ENCODE measurements at regions of chr9 and their contacts with region 1.

Region 1: DNA sequence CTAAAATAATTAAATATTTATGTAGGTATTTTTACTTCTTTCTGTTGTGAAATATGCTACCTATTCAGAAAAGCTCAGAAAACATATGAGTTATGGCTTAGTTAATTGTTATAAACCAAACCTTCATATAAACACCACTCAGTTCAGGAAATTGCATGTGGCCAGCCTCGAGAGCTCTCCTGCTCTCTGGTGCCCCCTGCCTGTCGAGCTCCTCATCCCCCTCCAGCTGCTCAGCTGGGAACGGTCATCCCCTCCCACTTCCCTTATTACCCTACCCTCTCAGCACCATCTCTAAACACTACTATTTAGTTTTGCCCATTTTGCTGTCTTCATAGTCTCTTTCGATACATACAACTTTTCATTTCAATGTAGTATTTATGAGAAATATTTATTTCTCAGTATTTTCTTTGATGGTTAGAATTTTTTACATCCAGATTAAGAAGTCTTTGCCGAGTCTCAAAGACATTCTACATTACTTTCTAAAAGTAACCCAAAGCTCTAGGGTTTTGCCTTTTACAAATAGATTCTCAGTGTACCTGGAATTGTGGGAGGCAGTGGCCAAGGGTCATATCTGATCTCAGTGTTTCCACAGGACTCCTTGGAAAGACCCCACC is 51.2 kb upstream of the SEMA4D start:
- DNase-seq: peak; percentile 67 to 90 (median 84)
- H3K4me3 ChIP-seq: no peak overlapping the region
- H3K27ac ChIP-seq: no peak overlapping the region
- H3K4me1 ChIP-seq: no peaks in the 10 kb centered on the region
- H3K27me3 ChIP-seq: no peaks in the 10 kb centered on the region
- CTCF ChIP-seq: peak; percentile 84 to 97 (median 92)
- POLR2A ChIP-seq: no peak

Region 2: GRCh38 chr9:89323390-89323789 is 225.7 kb before region 1 on chr9:
- intact Hi-C with region 1: loop called (anchors 5 to 10 kb)
- DNase-seq: no peak
- H3K4me3 ChIP-seq: no peak overlapping the region
- H3K27ac ChIP-seq: no peak overlapping the region
- H3K4me1 ChIP-seq: peaks cover 12 to 40% of the 10 kb centered on the region in 2 donors
- H3K27me3 ChIP-seq: no peaks in the 10 kb centered on the region
- CTCF ChIP-seq: no peak
- POLR2A ChIP-seq: no peak

Region 3: GRCh38 chr9:89358985-89359384 is 190.2 kb before region 1 on chr9:
- intact Hi-C with region 1: loop called in 1 of 2 experiments (anchors 10 kb)
- DNase-seq: peak in 5 of 7 donors; percentile 20 to 78 (median 40)
- H3K4me3 ChIP-seq: no peak overlapping the region
- H3K27ac ChIP-seq: peak overlapping the region in 1 of 5 donors; percentile 33
- H3K4me1 ChIP-seq: peaks cover 2 to 3% of the 10 kb centered on the region in 2 donors
- H3K27me3 ChIP-seq: no peaks in the 10 kb centered on the region
- CTCF ChIP-seq: no peak
- POLR2A ChIP-seq: no peak

Region 4: DNA sequence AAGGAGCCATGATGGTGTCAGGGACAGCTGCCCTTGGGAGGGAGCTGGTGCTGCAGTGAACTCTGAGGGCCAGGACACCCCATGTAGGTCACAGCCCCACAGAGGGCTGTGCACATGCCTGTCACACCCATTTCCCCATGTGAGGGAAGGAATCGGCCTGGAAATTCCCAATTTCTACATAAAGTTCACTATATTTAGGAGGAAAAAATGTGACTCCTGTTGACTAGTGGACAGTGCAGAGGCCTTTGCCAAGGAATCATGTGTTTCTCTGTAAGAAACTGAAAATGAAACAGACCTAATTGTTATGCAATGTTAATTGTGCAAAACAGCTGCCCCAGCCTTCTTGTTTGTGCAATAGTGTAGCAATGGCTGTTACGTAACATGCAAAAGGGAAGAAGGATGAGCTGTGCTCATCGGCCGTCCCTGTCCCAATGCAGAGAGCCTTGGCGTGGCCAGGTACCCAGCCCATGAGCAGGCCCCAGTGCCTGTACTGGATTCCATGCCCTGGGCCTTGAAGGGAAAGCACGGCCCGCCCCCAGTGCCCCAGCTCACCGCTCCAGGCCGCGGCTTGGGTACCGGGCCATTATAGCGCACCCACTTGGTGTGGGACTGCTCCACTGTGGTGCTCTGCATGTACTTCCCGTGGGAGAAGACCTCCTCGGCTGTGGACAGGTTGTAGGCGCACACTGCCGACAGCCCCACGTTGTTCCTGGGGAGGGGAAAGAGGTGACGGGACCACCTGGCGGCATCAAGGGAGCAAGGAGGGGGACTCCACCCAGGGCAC is 160.9 kb before region 1 on chr9:
- intact Hi-C with region 1: loop called in 1 of 2 experiments (anchors 10 kb)
- DNase-seq: peak; percentile 64 to 86 (median 79)
- H3K4me3 ChIP-seq: no peak overlapping the region
- H3K27ac ChIP-seq: peak overlapping the region; percentile 55 to 90 (median 74)
- H3K4me1 ChIP-seq: peaks cover 7 to 20% of the 10 kb centered on the region in 2 donors
- H3K27me3 ChIP-seq: no peaks in the 10 kb centered on the region
- CTCF ChIP-seq: peak in 1 of 6 experiments; percentile 17
- POLR2A ChIP-seq: peak in 1 of 2 donors; percentile 13

Region 5: GRCh38 chr9:89410641-89411350 is 138.3 kb before region 1 on chr9:
- intact Hi-C with region 1: loop called in 1 of 2 experiments (anchors 10 kb)
- DNase-seq: no peak
- H3K4me3 ChIP-seq: no peak overlapping the region
- H3K27ac ChIP-seq: no peak overlapping the region
- H3K4me1 ChIP-seq: peaks cover 0 to 9% of the 10 kb centered on the region in 2 donors
- H3K27me3 ChIP-seq: no peaks in the 10 kb centered on the region
- CTCF ChIP-seq: peak in 2 of 6 experiments; percentile 22 to 27
- POLR2A ChIP-seq: no peak

Region 6: DNA sequence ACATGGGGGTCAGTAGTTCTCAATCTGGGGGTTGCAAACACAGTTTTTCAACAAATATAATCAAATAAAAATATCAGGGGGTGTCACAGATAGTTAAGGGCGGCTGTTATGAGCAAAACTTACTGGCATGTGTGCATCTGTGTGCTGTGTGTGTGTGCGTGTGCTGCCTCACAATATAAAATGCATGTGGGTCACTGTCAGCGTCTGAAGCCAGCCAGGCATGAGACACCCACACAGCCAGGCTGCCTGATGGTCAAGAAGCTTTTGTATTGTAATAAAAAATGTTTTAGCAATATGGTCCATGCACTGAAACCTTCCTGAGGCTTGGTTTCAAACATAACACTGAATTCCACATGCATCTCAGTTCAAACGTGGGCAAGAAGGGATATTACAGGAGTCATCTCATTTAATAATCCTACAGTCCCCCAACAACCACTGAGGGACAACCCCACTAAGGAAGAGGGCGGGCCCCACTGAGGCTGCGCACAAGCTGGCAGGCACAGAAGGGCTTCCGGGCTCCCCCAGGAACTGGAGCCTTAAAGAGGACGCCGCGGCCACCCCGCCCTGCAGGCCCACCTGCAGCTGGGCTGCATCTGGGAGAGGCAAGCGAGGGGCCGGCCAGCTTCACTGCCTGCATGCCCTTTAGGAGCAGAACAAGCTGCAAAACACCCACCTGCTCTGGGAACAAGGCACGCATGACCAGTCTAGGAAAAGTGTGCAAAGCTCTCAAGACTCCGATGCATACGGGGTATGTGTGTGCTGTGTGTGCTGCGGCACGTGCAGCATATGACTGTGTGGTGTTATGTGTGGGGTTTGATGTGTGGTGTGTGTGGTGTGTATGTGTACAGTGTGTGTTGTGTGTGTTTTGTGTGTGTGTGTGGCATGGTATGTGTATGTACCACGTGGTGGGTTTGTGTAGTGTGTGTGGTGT is 65.3 kb before region 1 on chr9:
- intact Hi-C with region 1: loop called in 1 of 2 experiments (anchors 10 kb)
- DNase-seq: peak in 1 of 7 donors; percentile 49
- H3K4me3 ChIP-seq: no peak overlapping the region
- H3K27ac ChIP-seq: no peak overlapping the region
- H3K4me1 ChIP-seq: peaks cover 0 to 11% of the 10 kb centered on the region in 2 donors
- H3K27me3 ChIP-seq: no peaks in the 10 kb centered on the region
- CTCF ChIP-seq: no peak
- POLR2A ChIP-seq: no peak